IMR-90 (cell line): ENCODE measurements at regions of chr11 and their contacts with region 1.

Region 1: GRCh38 chr11:122235615-122236014 is 119.6 kb upstream of the BLID start:
- DNase-seq: peak; percentile 96
- ATAC-seq: peak; percentile 81
- H3K4me3 ChIP-seq: no peak overlapping the region
- H3K27ac ChIP-seq: peak overlapping the region; percentile 88; the same call in 1 of the 2 replicates
- H3K4me1 ChIP-seq: peaks cover 9% of the 10 kb centered on the region
- H3K27me3 ChIP-seq: no peaks in the 10 kb centered on the region
- CTCF ChIP-seq: no peak
- POLR2A ChIP-seq: no peak
- RAD21 ChIP-seq: no peak

Region 2: DNA sequence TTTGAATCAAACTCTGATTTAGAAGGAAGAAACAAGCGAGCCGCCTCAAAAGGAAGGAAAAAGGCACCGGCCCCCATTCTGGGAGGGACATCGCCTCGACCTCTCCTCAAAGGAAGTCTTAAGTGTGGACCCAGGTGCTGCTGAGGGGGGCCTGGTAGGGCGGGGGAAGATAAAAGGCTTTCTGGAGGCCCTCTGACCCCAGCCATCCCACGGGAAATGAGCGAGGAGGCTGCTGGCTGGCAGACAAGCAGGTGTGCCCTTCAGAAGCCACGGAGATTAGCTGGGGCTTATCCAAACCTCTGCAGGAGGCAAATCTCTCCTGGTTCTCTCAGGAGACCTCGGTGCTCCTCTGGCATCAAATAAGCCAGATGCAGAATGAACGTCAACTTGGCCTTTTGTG is 51.8 kb after region 1 on chr11:
- CTCF ChIA-PET with region 1: no interaction called
- POLR2A ChIA-PET with region 1: no interaction called
- dilution Hi-C with region 1: no loop called
- in situ Hi-C with region 1: no loop called
- intact Hi-C with region 1: loop called (anchors 5 kb)
- DNase-seq: no peak
- ATAC-seq: no peak
- H3K4me3 ChIP-seq: no peak overlapping the region
- H3K27ac ChIP-seq: no peak overlapping the region
- H3K4me1 ChIP-seq: peaks cover 8% of the 10 kb centered on the region
- H3K27me3 ChIP-seq: no peaks in the 10 kb centered on the region
- CTCF ChIP-seq: no peak
- POLR2A ChIP-seq: no peak
- RAD21 ChIP-seq: no peak